ENCODE measurements at regions of chr17 and their contacts with region 1.

Region 1: DNA sequence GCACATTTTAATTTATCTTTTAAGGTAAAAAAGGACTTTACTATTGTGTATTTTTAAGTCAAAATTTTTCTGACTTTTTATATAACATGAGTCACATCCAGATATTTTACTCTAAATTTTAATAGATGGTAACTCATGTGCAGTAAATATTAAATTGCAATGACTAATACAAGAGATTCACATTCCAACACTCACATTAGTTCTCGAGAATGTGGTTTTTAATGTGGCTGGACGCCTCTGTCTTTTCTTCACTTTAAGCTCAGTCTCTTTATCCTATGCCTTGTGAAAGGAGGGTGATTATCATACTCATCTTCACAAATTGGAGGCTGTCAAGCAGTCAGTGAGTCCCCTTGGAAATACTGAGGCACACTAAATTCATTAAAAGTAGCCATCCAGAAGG is 315.6 kb downstream of the HS3ST3B1 start:
- DNase-seq: no peak
- H3K4me3 ChIP-seq: no peak overlapping the region
- H3K27ac ChIP-seq: no peak overlapping the region
- H3K4me1 ChIP-seq: no peaks in the 10 kb centered on the region
- H3K27me3 ChIP-seq: no peaks in the 10 kb centered on the region
- CTCF ChIP-seq: no peak

Region 2: GRCh38 chr17:14539801-14540200 is 76.7 kb before region 1 on chr17:
- CTCF ChIA-PET with region 1: no interaction called
- POLR2A ChIA-PET with region 1: interaction called, 10 read pairs
- intact Hi-C with region 1: no loop called
- DNase-seq: no peak
- H3K4me3 ChIP-seq: no peak overlapping the region
- H3K27ac ChIP-seq: no peak overlapping the region
- H3K4me1 ChIP-seq: no peaks in the 10 kb centered on the region
- H3K27me3 ChIP-seq: no peaks in the 10 kb centered on the region
- CTCF ChIP-seq: no peak